PC-3 (cell line): ENCODE measurements at regions of chr12 and their contacts with region 1.

Region 1: GRCh38 chr12:86914716-86915115 is 658.5 kb upstream of the MGAT4C start:
- DNase-seq: peak; percentile 61
- ATAC-seq: peak; percentile 77
- H3K4me3 ChIP-seq: no peak overlapping the region
- H3K27ac ChIP-seq: no peak overlapping the region
- H3K4me1 ChIP-seq: no peaks in the 10 kb centered on the region
- H3K27me3 ChIP-seq: no peaks in the 10 kb centered on the region
- CTCF ChIP-seq: peak; percentile 76

Region 2: DNA sequence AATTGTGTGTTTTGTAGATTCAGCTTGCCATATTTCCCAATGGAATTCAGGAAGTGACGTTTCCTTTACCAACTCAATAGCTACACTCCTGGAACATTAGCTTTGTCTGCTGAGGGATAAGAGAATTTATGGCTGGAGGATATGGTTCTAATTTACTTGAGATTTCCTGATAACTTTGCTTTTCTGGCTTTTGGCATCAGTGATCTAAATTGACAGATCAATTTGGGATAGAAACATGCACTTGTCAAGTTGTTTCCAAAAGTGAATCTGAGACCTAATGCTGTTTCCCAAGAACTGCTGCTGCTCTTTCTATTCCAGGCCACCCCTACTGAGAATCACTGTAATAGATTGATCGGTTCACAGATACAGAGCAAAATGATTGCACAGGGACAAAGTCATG is 701.7 kb before region 1 on chr12:
- CTCF ChIA-PET with region 1: no interaction called
- POLR2A ChIA-PET with region 1: interaction called, 24 read pairs
- intact Hi-C with region 1: no loop called
- DNase-seq: no peak
- ATAC-seq: no peak
- H3K4me3 ChIP-seq: no peak overlapping the region
- H3K27ac ChIP-seq: no peak overlapping the region
- H3K4me1 ChIP-seq: no peaks in the 10 kb centered on the region
- H3K27me3 ChIP-seq: no peaks in the 10 kb centered on the region
- CTCF ChIP-seq: no peak

Region 3: DNA sequence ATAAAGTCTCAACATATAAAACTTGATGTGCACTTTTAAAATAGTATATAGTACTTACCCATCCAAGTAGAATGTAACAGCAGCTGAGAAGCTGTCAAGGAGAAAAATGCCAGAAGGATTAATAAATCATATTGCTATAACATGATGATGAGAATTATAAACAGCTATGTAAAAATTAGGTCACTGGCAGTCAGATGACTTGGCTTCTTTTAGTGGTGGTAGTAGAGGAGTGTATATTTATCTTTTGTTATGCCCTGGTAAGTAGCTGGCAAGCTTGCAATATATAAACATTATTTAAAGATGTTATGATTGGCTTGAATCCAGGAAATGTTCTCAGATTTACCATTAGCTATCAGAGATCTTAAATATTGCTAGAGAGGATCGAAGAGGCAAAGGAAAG is 187.6 kb before region 1 on chr12:
- CTCF ChIA-PET with region 1: no interaction called
- POLR2A ChIA-PET with region 1: no interaction called
- intact Hi-C with region 1: loop called (anchors 5 kb)
- DNase-seq: peak; percentile 60
- ATAC-seq: peak; percentile 84
- H3K4me3 ChIP-seq: no peak overlapping the region
- H3K27ac ChIP-seq: no peak overlapping the region
- H3K4me1 ChIP-seq: peaks cover 7% of the 10 kb centered on the region
- H3K27me3 ChIP-seq: no peaks in the 10 kb centered on the region
- CTCF ChIP-seq: no peak

Region 4: GRCh38 chr12:87001102-87001501 is 86.4 kb after region 1 on chr12:
- CTCF ChIA-PET with region 1: no interaction called
- POLR2A ChIA-PET with region 1: no interaction called
- intact Hi-C with region 1: no loop called
- DNase-seq: no peak
- ATAC-seq: no peak
- H3K4me3 ChIP-seq: no peak overlapping the region
- H3K27ac ChIP-seq: no peak overlapping the region
- H3K4me1 ChIP-seq: no peaks in the 10 kb centered on the region
- H3K27me3 ChIP-seq: no peaks in the 10 kb centered on the region
- CTCF ChIP-seq: no peak